ENCODE measurements at regions of chr6 and their contacts with region 1.

Region 1: GRCh38 chr6:135105710-135106109 is 51.1 kb upstream of the HBS1L start:
- DNase-seq: peak; percentile 15
- H3K4me3 ChIP-seq: no peak overlapping the region
- H3K27ac ChIP-seq: no peak overlapping the region
- H3K4me1 ChIP-seq: peaks cover 45% of the 10 kb centered on the region
- CTCF ChIP-seq: no peak

Region 2: DNA sequence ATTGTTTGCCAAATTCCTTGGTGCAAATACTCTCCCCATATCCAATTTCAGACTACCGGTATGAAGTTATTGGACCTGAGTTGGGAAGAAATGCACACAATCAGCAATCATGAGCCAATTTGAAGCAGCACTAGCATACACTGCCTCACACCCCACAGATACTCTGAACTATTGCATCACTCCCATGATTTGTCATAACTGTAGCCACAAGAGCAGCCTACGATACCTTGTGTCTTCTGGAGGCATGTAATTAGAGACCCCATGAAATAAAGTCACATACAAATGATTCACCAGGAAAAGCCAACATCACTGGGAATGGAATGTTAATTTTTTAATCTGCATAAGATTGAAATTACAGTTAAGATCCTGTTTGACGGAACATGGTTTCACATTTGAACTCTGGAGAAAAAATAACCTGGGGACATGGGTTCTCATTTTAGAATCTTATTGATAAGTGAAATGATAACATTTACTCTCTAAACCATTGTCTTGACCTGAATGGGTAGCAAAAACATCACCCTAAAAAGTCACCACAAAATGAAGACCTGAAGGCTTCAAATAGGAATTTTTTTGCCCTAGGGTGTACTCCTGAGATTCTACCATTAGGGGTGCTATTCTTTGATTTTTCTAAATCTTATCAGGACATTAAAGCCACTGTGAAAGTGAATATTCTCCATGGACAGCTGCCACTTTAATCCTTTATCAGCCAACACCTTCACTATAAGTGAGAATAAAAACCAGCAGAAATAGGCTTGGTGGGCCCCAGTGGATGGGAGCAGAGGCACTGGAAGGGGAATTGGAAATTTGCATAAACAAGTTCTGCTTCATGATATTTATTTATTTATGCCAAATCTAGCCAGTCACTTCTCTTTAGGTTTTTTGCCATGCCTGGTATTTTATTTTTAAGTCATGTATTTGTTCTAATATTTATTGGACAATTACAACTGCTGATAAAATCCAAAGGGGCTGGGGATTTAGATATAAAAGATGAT is 16.6 kb before region 1 on chr6:
- CTCF ChIA-PET with region 1: interaction called, 3 read pairs
- POLR2A ChIA-PET with region 1: interaction called, 32 read pairs
- intact Hi-C with region 1: no loop called
- DNase-seq: peak; percentile 51
- H3K4me3 ChIP-seq: no peak overlapping the region
- H3K27ac ChIP-seq: no peak overlapping the region
- H3K4me1 ChIP-seq: no peaks in the 10 kb centered on the region
- CTCF ChIP-seq: peak; percentile 80

Region 3: GRCh38 chr6:135135835-135136234 is 30.1 kb after region 1 on chr6:
- CTCF ChIA-PET with region 1: no interaction called
- POLR2A ChIA-PET with region 1: no interaction called
- intact Hi-C with region 1: no loop called
- DNase-seq: no peak
- H3K4me3 ChIP-seq: no peak overlapping the region
- H3K27ac ChIP-seq: no peak overlapping the region
- H3K4me1 ChIP-seq: peaks cover 5% of the 10 kb centered on the region
- CTCF ChIP-seq: no peak

Region 4: DNA sequence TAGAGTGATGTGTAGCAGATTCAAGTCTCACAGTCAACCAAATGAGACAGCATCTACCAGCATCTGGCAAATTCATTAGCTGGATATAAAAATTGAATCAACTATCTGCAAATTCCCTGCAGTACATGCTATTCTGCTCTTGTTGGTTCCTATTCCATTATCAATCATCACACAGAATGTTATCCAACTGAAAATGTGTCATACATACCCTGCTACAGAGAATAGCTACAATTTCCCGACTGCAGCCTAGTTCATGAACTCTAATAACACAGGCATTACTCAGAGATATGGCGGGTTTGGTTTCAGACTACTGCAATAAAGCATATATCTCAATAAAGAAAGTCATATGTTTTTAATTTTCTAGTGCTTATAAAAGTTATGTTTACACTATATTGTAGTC is 313.5 kb after region 1 on chr6:
- CTCF ChIA-PET with region 1: no interaction called
- POLR2A ChIA-PET with region 1: no interaction called
- intact Hi-C with region 1: no loop called
- DNase-seq: no peak
- H3K4me3 ChIP-seq: no peak overlapping the region
- H3K27ac ChIP-seq: no peak overlapping the region
- H3K4me1 ChIP-seq: peaks cover 11% of the 10 kb centered on the region
- CTCF ChIP-seq: no peak

Measured in OCI-LY7 (cell line).